Activated B cell treated with CpG ODN at 0.5 μM for 24 hours (primary cell): ENCODE measurements at regions of chr17 and their contacts with region 1.

Region 1: GRCh38 chr17:76014184-76014924 is 12.8 kb downstream of the EVPL start:
- DNase-seq: peak; percentile 66
- ATAC-seq: peak; percentile 99
- H3K4me3 Mint-ChIP-seq: no peak overlapping the region
- H3K27ac Mint-ChIP-seq: no peak overlapping the region
- H3K4me1 Mint-ChIP-seq: peaks cover 5% of the 10 kb centered on the region
- H3K27me3 Mint-ChIP-seq: no peaks in the 10 kb centered on the region
- CTCF ChIP-seq: no peak

Region 2: GRCh38 chr17:75723171-75723834 is 291.1 kb before region 1 on chr17:
- CTCF ChIA-PET with region 1: no interaction called
- POLR2A ChIA-PET with region 1: no interaction called
- intact Hi-C with region 1: no loop called
- DNase-seq: no peak
- ATAC-seq: no peak
- H3K4me3 Mint-ChIP-seq: no peak overlapping the region
- H3K27ac Mint-ChIP-seq: no peak overlapping the region
- H3K4me1 Mint-ChIP-seq: peaks cover 4% of the 10 kb centered on the region
- H3K27me3 Mint-ChIP-seq: peaks cover 6% of the 10 kb centered on the region
- CTCF ChIP-seq: no peak

Region 3: DNA sequence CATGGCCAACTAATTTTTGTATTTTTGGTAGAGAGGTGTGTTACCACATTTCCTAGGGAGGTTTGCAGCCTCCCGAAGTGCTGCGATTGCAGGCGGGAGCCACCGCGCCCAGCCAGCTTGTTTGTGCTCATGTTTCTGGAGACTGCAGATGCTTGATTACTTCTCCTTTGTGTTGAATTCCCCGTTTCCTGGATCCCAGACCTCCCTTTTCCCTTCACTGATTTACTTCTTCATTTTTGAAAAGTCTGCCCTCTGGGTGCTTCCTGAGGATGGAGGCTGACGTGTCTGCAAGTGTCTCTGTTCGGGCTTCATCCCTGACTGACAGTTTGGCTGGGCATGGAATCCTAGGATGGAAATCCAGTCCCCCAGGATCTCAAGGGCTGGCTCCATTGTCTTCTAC is 128.9 kb before region 1 on chr17:
- CTCF ChIA-PET with region 1: no interaction called
- POLR2A ChIA-PET with region 1: no interaction called
- intact Hi-C with region 1: no loop called
- DNase-seq: no peak
- ATAC-seq: no peak
- H3K4me3 Mint-ChIP-seq: no peak overlapping the region
- H3K27ac Mint-ChIP-seq: no peak overlapping the region
- H3K4me1 Mint-ChIP-seq: no peaks in the 10 kb centered on the region
- H3K27me3 Mint-ChIP-seq: peaks cover 3% of the 10 kb centered on the region
- CTCF ChIP-seq: no peak

Region 4: DNA sequence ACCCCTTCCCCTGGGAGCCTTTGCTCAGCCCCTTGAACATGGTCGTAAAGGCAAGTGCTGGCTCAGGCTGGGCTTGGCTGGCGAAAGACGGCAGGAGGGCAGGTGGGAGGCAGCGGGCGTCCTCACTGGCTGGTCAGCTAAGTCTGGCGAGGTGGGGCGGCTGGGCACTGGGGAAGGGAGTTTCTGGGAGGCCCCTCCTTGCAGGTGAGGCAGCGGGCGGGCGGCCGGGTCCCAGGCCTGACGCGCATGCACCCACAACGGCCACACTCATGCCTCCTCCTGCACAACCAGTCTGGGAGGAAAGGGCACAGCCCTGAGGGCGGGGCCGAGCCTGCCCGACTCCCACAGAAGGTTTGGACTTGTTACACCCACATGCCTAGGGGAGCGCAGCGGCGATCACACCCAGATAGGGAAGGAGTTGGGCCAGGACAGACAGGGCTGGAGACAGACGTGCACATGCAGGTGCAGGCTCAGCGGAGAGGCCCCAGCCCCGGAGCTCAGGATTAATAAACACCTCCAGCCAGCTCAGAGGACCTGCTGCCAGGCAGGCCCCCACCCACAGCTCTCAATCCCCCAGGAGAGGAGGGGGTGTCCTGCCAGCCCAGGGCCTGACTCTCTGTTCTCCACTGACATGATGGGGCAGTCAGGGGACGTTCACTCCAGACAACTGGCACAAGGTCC is 12.9 kb after region 1 on chr17 and contains the start of gene EVPL:
- CTCF ChIA-PET with region 1: interaction called, 3 read pairs
- POLR2A ChIA-PET with region 1: interaction called, 10 read pairs
- intact Hi-C with region 1: no loop called
- DNase-seq: no peak
- ATAC-seq: no peak
- H3K4me3 Mint-ChIP-seq: no peak within 1 kb of the TSS
- H3K27ac Mint-ChIP-seq: no peak within 1 kb of the TSS
- H3K4me1 Mint-ChIP-seq: peaks cover 8% of the 10 kb centered on the region
- H3K27me3 Mint-ChIP-seq: no peaks in the 10 kb centered on the region
- CTCF ChIP-seq: no peak
- total RNA-seq, gene EVPL: not detected in 2 replicates

Region 5: DNA sequence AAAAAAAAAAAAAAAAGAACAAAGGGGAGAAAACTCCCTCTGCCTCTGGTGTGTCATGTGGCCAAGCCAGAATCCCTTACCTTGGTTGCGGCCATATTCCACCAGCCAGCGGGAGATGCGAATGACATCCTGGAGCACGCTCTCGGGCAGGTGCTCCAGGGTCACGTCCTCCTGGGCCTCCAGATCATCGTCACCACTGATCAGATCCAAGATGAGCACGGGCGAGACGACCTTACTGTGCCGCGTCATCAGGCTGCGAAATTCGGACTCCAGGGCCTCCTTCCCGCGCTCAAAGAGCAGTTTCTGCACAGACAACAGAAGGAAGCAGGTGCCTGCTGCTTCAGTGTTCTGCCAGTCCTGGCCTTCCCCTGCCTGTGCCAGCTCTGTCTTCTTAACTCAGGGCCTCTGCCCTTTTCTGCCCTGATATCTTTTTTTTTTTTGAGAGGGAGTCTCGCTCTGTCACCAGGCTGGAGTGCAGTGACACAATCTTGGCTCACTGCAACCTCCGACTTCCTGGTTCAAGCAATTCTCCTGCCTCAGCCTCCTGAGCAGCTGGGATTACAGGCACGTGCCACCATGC is 83.5 kb after region 1 on chr17:
- CTCF ChIA-PET with region 1: no interaction called
- POLR2A ChIA-PET with region 1: no interaction called
- intact Hi-C with region 1: no loop called
- DNase-seq: no peak
- ATAC-seq: no peak
- H3K4me3 Mint-ChIP-seq: no peak overlapping the region
- H3K27ac Mint-ChIP-seq: no peak overlapping the region
- H3K4me1 Mint-ChIP-seq: peaks cover 9% of the 10 kb centered on the region
- H3K27me3 Mint-ChIP-seq: no peaks in the 10 kb centered on the region
- CTCF ChIP-seq: no peak

Region 6: DNA sequence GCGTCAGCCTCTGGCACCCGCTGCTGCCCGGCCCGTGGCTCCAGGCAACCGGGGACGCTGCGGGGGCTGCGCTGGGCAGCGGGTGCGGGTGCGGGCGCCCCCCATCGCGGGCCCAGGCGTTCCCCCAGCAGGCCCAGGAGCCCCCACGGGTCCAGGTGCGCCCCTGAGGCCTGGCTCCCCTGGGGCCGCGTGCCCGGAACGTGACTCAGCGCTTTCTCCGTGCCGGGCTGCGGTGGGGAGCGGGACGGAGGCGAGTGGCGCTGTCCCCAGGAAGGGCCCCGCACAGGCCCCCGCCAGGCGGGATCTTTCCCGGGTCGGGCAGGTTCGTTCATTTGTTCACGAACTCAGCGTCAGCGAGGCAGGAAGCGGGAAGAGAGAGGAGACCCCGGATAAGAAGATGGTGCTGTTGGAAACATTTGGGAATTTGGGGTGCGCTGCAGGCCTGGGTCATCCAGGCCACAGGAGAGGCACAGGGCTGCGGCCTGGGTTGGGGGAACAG is 107.6 kb after region 1 on chr17:
- CTCF ChIA-PET with region 1: interaction called, 4 read pairs
- POLR2A ChIA-PET with region 1: interaction called, 4 read pairs
- intact Hi-C with region 1: loop called (anchors 5 kb)
- DNase-seq: no peak
- ATAC-seq: peak; percentile 29
- H3K4me3 Mint-ChIP-seq: peak overlapping the region; percentile 62
- H3K27ac Mint-ChIP-seq: peak overlapping the region; percentile 50
- H3K4me1 Mint-ChIP-seq: peaks cover 17% of the 10 kb centered on the region
- H3K27me3 Mint-ChIP-seq: peaks cover 3% of the 10 kb centered on the region
- CTCF ChIP-seq: no peak

Region 7: DNA sequence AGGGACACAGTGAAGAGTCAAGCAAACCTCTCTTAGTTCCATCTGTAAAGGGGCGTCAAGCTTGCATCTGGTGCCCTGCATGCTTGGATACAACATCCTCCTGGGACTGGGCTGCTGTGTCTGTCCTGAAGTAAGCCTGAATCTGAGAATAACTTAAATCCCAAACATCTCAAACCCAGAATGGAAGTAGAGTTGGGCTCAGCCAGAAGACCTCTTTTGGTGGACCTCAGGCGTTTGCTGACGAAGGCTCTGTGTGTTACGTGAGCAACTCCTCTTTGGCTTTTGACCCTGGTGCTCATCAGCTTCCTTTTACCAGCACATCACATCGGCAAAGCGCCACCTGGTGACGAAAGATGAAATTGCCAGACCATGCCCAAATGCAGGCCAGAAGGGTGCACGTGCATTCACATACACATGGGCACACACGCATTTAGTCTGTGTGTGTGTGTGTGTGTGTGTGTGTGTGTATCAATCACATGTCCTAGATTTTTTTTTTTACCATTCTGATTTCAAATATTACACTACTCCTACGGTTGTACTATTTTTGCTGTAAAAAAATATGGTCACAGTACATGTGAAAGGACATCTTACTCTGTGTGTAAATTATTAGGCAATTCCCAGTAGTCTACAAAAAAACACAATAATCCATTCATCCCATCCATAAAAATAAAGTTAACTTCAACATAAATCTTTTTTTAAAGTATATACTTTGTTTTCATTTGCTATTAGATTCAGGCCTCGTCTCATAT is 167.8 kb after region 1 on chr17:
- CTCF ChIA-PET with region 1: interaction called, 3 read pairs
- POLR2A ChIA-PET with region 1: no interaction called
- intact Hi-C with region 1: loop called (anchors 5 kb)
- DNase-seq: peak; percentile 87
- ATAC-seq: peak; percentile 97
- H3K4me3 Mint-ChIP-seq: no peak overlapping the region
- H3K27ac Mint-ChIP-seq: no peak overlapping the region
- H3K4me1 Mint-ChIP-seq: peaks cover 34% of the 10 kb centered on the region
- H3K27me3 Mint-ChIP-seq: no peaks in the 10 kb centered on the region
- CTCF ChIP-seq: peak; percentile 21

Region 8: DNA sequence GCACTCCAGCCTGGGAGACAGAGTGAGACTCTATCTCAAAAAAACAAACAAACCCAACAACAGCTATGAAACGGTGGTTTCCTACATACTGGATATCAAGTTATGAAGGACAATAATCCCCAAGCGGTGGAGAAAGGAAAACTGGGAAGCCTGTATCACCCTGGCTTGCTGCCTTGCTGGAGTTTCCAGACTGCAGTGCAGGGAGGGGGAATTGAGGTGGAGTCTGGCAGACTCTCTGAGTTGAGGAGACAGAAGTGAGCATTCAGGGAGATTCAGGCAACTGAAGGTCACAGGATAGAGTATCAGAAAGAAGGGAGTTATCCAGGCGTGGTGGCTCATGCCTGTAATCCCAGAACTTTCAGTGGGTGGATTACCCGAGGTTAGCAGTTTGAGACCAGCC is 281.8 kb after region 1 on chr17:
- CTCF ChIA-PET with region 1: interaction called, 50 read pairs
- POLR2A ChIA-PET with region 1: interaction called, 3 read pairs
- intact Hi-C with region 1: loop called (anchors 1 kb)
- DNase-seq: no peak
- ATAC-seq: no peak
- H3K4me3 Mint-ChIP-seq: no peak overlapping the region
- H3K27ac Mint-ChIP-seq: no peak overlapping the region
- H3K4me1 Mint-ChIP-seq: peaks cover 3% of the 10 kb centered on the region
- H3K27me3 Mint-ChIP-seq: no peaks in the 10 kb centered on the region
- CTCF ChIP-seq: no peak

Region 9: GRCh38 chr17:76384222-76384986 is 370.1 kb after region 1 on chr17 and contains the start of gene SPHK1:
- CTCF ChIA-PET with region 1: no interaction called
- POLR2A ChIA-PET with region 1: no interaction called
- intact Hi-C with region 1: loop called (anchors 10 kb)
- DNase-seq: peak; percentile 77
- ATAC-seq: peak; percentile 75
- H3K4me3 Mint-ChIP-seq: peak within 1 kb of the TSS; percentile 86
- H3K27ac Mint-ChIP-seq: peak within 1 kb of the TSS; percentile 71
- H3K4me1 Mint-ChIP-seq: peaks cover 15% of the 10 kb centered on the region
- H3K27me3 Mint-ChIP-seq: peaks cover 2% of the 10 kb centered on the region
- CTCF ChIP-seq: no peak
- total RNA-seq, gene SPHK1: 1.1 and 1.3 TPM in 2 replicates